ENCODE measurements at regions of chr6 and their contacts with region 1.

Region 1: GRCh38 chr6:13908955-13909381 is 15.8 kb upstream of the RNF182 start:
- DNase-seq: peak; percentile 45
- H3K4me3 ChIP-seq: no peak overlapping the region
- H3K27ac ChIP-seq: no peak overlapping the region
- H3K4me1 ChIP-seq: no peaks in the 10 kb centered on the region
- H3K27me3 ChIP-seq: no peaks in the 10 kb centered on the region
- CTCF ChIP-seq: peak; percentile 26 to 82 (median 78)
- POLR2A ChIP-seq: no peak

Region 2: DNA sequence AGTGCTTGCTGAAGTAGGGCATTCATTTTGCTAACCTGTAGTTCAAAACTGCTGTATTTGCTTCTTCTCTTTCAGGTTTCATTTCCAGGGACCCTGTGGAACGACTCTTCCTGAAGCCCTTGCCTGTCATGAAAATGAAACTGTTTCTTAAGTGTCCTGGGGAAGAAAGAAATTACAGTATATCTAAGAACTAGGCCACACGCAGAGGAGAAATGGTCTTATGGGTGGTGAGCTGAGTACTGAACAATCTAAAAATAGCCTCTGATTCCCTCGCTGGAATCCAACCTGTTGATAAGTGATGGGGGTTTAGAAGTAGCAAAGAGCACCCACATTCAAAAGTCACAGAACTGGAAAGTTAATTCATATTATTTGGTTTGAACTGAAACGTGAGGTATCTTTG is 297.3 kb before region 1 on chr6:
- intact Hi-C with region 1: no loop called
- DNase-seq: no peak
- H3K4me3 ChIP-seq: no peak overlapping the region
- H3K27ac ChIP-seq: no peak overlapping the region
- H3K4me1 ChIP-seq: peaks cover 2% of the 10 kb centered on the region
- H3K27me3 ChIP-seq: no peaks in the 10 kb centered on the region
- CTCF ChIP-seq: no peak
- POLR2A ChIP-seq: no peak

Region 3: GRCh38 chr6:14144678-14145113 is 235.7 kb after region 1 on chr6:
- intact Hi-C with region 1: loop called (anchors 2 kb)
- DNase-seq: peak; percentile 39
- H3K4me3 ChIP-seq: no peak overlapping the region
- H3K27ac ChIP-seq: no peak overlapping the region
- H3K4me1 ChIP-seq: no peaks in the 10 kb centered on the region
- H3K27me3 ChIP-seq: no peaks in the 10 kb centered on the region
- CTCF ChIP-seq: peak; percentile 79 to 86 (median 84)
- POLR2A ChIP-seq: no peak

Measured in prostate gland (tissue), 2 donors.